Ovary (tissue), 10 donors: ENCODE measurements at regions of chr11 and their contacts with region 1.

Region 1: GRCh38 chr11:39917256-39917655 is 1542.2 kb downstream of the LRRC4C start:
- DNase-seq: no peak
- H3K4me3 ChIP-seq: no peak overlapping the region
- H3K27ac ChIP-seq: no peak overlapping the region
- H3K4me1 ChIP-seq: no peaks in the 10 kb centered on the region
- H3K27me3 ChIP-seq: no peaks in the 10 kb centered on the region
- CTCF ChIP-seq: no peak
- EP300 ChIP-seq: no peak
- POLR2A ChIP-seq: no peak

Region 2: DNA sequence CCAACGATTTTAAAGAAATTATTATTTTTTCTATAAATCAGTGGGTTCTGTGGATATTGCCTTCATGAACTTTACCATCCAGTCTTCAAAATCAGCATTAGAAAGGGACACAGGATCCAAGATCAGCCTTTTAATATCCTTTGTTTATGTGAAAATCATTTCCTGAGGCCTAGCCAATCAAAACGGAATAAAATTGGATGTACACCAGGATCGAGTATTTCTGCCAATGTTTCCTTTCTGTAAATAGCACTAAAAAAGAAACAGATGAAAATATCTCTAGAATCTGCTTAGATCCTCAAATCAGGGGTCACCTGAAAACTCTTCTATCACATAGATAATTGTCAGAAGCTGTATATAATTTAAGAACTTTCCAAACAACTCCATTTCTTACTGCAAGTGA is 56.3 kb before region 1 on chr11:
- intact Hi-C with region 1: no loop called
- DNase-seq: no peak
- H3K4me3 ChIP-seq: no peak overlapping the region
- H3K27ac ChIP-seq: no peak overlapping the region
- H3K4me1 ChIP-seq: no peaks in the 10 kb centered on the region
- H3K27me3 ChIP-seq: no peaks in the 10 kb centered on the region
- CTCF ChIP-seq: no peak
- EP300 ChIP-seq: no peak
- POLR2A ChIP-seq: no peak

Region 3: DNA sequence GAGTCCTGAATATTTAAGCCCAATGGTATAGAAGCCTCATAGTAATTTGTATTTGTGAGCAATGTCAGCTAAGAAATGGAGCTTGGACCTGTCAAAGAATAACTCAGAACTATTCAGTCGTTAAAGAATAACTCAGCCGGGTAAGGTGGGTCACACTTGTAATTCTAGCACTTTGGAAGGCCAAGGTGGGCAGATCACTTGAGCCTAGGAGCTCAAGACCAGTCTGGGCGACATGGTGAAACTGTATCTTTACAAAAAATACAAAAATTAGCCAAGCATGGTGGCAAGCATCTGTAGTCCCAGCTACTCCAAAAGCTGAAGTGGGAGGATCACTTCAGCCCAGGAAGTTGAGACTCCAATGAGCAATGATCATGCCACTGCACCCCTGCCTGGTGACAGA is 15.7 kb after region 1 on chr11:
- intact Hi-C with region 1: loop called in 1 of 4 experiments (anchors 1 kb)
- DNase-seq: no peak
- H3K4me3 ChIP-seq: no peak overlapping the region
- H3K27ac ChIP-seq: no peak overlapping the region
- H3K4me1 ChIP-seq: no peaks in the 10 kb centered on the region
- H3K27me3 ChIP-seq: no peaks in the 10 kb centered on the region
- CTCF ChIP-seq: no peak
- EP300 ChIP-seq: no peak
- POLR2A ChIP-seq: no peak